A673 (cell line): ENCODE measurements at regions of chr1 and their contacts with region 1.

Region 1: DNA sequence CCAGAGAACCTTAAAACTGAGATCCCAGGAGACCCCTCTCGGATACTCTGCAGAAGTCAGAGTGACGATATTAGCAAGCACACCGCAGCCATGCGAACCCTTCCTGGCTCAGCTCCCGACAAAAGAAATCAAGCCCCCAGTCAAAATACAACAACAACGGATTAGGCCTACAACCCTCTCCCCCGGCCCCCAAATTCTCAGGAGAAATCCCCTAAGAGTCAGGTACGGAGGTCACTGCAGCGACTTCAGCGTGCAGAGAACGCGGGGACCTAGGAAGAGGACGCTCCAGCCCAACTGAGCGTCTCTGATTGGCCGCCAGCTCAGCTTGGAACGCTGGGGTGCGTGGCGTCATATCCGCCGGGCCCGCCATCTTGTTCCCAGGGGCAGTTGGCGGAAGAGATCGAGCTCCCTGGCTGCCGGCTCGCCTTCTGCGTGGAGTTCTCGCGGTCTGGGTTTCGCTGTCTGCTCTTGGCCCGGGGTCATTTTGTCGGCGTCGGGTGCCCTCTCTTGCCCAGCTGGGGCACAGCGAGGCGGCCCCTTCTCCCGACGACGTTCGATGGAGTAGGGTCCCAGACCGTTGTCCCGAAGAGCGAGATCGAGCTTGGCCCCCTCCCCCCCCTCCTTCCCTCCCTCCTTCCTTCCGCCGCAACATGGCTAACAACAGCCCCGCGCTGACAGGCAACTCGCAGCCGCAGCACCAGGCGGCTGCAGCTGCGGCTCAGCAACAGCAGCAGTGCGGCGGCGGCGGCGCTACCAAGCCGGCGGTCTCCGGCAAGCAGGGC is at the start of gene PRPF38B:
- DNase-seq: peak; percentile 97
- H3K4me3 ChIP-seq: peak within 1 kb of the TSS; percentile 77
- H3K27ac ChIP-seq: peak within 1 kb of the TSS; percentile 94
- H3K4me1 ChIP-seq: peaks cover 16% of the 10 kb centered on the region
- H3K27me3 ChIP-seq: no peaks in the 10 kb centered on the region
- CTCF ChIP-seq: no peak
- total RNA-seq, gene PRPF38B: 49.3 and 59.5 TPM in 2 replicates

Region 2: DNA sequence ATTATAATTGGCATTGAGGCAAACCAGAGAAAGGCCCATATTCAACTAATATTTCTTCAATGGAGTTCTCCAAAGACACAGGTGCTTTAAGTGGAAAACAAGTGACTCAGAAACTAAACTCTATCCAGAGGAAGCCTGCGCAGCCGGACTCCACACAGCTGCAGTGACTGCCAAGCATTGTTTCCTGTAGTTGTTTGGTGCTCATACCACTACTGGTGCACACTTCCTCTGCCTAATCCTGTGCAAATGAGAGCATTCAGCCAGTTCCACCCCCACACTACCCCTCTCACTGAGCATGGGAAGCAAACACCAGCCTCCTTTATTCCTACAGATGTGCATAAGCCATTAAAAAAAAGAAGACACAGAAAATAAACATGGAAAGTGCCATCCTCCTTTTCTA is 830.1 kb before region 1 on chr1:
- CTCF ChIA-PET with region 1: no interaction called
- POLR2A ChIA-PET with region 1: no interaction called
- intact Hi-C with region 1: no loop called
- DNase-seq: peak; percentile 67
- H3K4me3 ChIP-seq: no peak overlapping the region
- H3K27ac ChIP-seq: no peak overlapping the region
- H3K4me1 ChIP-seq: no peaks in the 10 kb centered on the region
- H3K27me3 ChIP-seq: no peaks in the 10 kb centered on the region
- CTCF ChIP-seq: no peak

Region 3: DNA sequence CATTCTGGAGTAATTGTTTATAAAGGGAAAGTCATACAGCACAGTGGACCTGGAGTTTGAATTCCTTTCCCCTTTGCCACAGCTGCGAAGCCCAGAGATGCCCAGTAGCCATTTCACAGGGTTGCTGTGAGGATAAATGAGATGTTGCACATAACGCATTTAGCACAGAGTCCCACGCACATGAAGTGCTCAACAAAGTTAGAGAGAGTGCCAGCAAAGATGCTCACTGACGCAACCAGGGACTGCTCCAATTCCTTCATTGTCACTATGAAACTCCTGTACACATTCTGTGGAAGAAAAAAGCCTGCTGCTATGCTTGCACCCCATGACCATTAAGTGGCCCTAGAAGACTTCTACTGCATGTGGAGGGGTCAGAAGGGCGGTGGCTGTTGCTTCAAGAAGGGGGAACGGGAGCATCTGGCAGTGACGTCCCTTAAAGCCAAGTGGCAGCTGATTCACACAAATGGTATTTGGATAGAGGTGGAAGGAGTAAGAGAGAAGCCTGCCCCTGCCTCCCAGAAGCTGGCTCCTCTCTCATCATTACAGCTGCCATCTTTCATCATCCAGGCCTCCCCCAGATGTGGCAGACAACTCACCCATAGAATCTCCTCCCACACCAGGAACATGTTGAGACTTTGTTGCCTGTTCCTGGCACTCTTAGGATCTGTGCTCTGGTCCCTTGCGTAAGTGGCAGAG is 700.6 kb before region 1 on chr1:
- CTCF ChIA-PET with region 1: no interaction called
- POLR2A ChIA-PET with region 1: no interaction called
- intact Hi-C with region 1: no loop called
- DNase-seq: no peak
- H3K4me3 ChIP-seq: no peak overlapping the region
- H3K27ac ChIP-seq: no peak overlapping the region
- H3K4me1 ChIP-seq: no peaks in the 10 kb centered on the region
- H3K27me3 ChIP-seq: no peaks in the 10 kb centered on the region
- CTCF ChIP-seq: no peak

Region 4: DNA sequence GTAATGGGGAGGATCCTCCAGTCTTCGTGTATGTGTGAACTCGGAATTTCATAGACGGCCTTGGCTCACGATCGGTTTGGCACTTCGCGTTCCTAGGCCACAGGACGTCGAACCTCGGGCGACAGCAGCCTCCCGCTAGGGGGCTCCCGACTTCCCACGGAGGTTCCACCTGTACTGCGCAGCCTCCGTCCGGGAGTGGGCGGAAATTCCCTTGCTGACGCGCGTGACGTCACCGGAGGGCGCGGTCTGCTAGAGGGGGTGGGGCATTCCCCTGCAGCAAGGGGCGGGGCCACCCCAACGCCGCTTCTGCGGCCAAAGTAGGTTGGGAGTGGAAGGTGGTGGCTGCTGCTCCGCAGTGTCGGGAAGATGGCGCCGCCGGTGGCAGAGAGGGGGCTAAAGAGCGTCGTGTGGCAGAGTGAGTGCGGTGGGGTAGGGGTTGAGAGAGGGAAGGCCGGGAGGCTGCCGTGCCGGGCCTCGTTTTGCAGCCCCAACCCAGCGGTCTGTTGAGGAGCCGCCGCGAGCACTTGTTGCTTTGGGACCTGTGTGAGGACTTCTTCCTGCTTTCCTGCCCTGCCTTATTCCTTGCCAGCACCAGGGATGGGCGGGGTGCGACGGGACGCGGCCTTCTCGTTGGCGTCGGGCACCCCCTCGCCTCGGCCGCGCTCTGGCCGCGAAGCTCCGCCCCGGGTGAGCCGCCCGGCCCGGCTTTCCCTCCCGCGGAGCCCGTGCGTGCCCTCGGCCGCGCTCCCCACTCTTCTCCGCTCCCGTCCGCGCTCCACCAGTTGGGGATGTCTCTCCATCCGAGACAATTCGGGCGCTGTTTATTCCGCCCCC is 54.5 kb after region 1 on chr1 and contains the start of gene STXBP3:
- CTCF ChIA-PET with region 1: no interaction called
- POLR2A ChIA-PET with region 1: no interaction called
- intact Hi-C with region 1: loop called (anchors 2 kb)
- DNase-seq: peak; percentile 98
- H3K4me3 ChIP-seq: peak within 1 kb of the TSS; percentile 86
- H3K27ac ChIP-seq: peak within 1 kb of the TSS; percentile 89
- H3K4me1 ChIP-seq: peaks cover 5% of the 10 kb centered on the region
- H3K27me3 ChIP-seq: no peaks in the 10 kb centered on the region
- CTCF ChIP-seq: peak; percentile 99
- total RNA-seq, gene STXBP3: 23.6 and 24.4 TPM in 2 replicates

Region 5: GRCh38 chr1:108862698-108863477 is 170.8 kb after region 1 on chr1:
- CTCF ChIA-PET with region 1: no interaction called
- POLR2A ChIA-PET with region 1: interaction called, 13 read pairs
- intact Hi-C with region 1: no loop called
- DNase-seq: no peak
- H3K4me3 ChIP-seq: no peak overlapping the region
- H3K27ac ChIP-seq: no peak overlapping the region
- H3K4me1 ChIP-seq: peaks cover 3% of the 10 kb centered on the region
- H3K27me3 ChIP-seq: no peaks in the 10 kb centered on the region
- CTCF ChIP-seq: no peak